Heart right ventricle (tissue), 16 donors: ENCODE measurements at regions of chr2 and their contacts with region 1.

Region 1: GRCh38 chr2:212536817-212537725 is 1.5 kb downstream of the ERBB4 start:
- DNase-seq: peak in 1 of 2 donors; percentile 19
- ATAC-seq: peak; percentile 1 to 48 (median 30)
- H3K4me3 ChIP-seq: peak overlapping the region; percentile 37 to 71 (median 66)
- H3K27ac ChIP-seq: peak overlapping the region in 9 of 10 donors; percentile 36 to 74 (median 62)
- H3K4me1 ChIP-seq: peaks cover 0 to 38% (median 11%) of the 10 kb centered on the region in 9 donors
- H3K27me3 ChIP-seq: peaks cover 0 to 74% (median 53%) of the 10 kb centered on the region in 7 donors
- CTCF ChIP-seq: no peak

Region 2: GRCh38 chr2:211881449-211881848 is 655.6 kb before region 1 on chr2:
- intact Hi-C with region 1: loop called in 1 of 10 experiments (anchors 10 kb)
- DNase-seq: no peak
- ATAC-seq: no peak
- H3K4me3 ChIP-seq: no peak overlapping the region
- H3K27ac ChIP-seq: no peak overlapping the region
- H3K4me1 ChIP-seq: no peaks in the 10 kb centered on the region
- H3K27me3 ChIP-seq: no peaks in the 10 kb centered on the region
- CTCF ChIP-seq: no peak

Region 3: GRCh38 chr2:211898702-211899101 is 638.4 kb before region 1 on chr2:
- intact Hi-C with region 1: loop called in 1 of 10 experiments (anchors 2 kb)
- DNase-seq: no peak
- ATAC-seq: no peak
- H3K4me3 ChIP-seq: no peak overlapping the region
- H3K27ac ChIP-seq: peak overlapping the region in 2 of 10 donors; percentile 59
- H3K4me1 ChIP-seq: peaks cover 0 to 17% (median 0%) of the 10 kb centered on the region in 9 donors
- H3K27me3 ChIP-seq: no peaks in the 10 kb centered on the region
- CTCF ChIP-seq: no peak

Region 4: DNA sequence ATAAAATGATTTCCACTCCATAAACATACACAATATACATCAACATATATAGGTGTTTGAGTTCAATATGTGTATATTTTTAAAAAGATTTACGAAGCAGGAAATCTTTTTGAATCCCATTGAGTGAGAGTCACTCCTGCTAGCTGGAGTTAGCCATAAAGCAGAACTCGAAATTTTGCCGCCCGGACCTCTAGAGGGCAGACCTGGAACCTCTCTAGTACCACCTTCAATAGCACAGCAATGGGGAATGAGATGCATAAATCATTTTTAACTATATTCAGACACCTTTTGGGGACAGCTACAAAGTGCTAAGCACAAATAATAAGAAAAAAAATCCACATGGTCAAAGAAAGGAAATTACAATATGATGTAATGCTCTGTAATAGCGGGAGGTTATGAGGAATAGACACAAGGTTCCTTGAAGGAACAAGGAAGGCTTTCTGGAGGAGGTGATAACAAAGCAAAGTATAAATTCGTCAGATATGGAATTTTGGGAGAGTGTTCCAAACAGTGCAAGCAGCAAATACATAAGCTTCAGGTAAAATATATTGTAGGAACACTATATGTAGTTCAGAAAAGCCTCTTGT is 531.9 kb before region 1 on chr2:
- intact Hi-C with region 1: loop called in 2 of 10 experiments (anchors 10 kb)
- DNase-seq: peak; percentile 8 to 9
- ATAC-seq: peak in 3 of 8 donors; percentile 55 to 62 (median 56)
- H3K4me3 ChIP-seq: no peak overlapping the region
- H3K27ac ChIP-seq: no peak overlapping the region
- H3K4me1 ChIP-seq: no peaks in the 10 kb centered on the region
- H3K27me3 ChIP-seq: no peaks in the 10 kb centered on the region
- CTCF ChIP-seq: peak in 7 of 9 donors; percentile 37 to 59 (median 43)

Region 5: DNA sequence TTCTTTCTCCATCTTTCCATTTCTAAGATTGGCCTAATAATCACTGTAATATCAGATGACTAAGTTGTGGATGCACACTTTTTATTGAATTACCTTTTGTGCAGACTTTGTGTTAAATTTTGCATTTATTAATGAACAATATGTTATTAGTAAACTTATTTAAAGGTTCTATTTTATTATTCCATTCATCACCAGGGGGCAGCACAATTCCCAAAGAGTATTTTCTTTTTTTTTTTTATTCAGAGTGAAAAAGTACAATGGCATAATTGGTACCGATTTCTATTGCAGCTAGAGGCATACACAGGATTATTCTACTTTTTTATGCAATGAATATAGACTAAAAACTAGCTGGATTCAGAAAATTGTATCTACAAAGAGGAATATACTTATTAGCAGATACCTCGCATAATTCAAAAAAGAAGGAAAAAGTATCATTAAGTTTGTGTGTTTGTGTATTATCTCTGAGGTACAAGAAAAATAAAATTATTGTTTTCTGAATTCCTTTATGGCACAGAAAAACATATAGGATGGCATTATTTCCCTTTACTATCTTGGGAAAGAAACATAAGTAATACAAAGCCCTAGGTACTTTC is 389.1 kb before region 1 on chr2:
- intact Hi-C with region 1: loop called in 5 of 10 experiments (anchors 10 kb)
- DNase-seq: no peak
- ATAC-seq: no peak
- H3K4me3 ChIP-seq: no peak overlapping the region
- H3K27ac ChIP-seq: no peak overlapping the region
- H3K4me1 ChIP-seq: no peaks in the 10 kb centered on the region
- H3K27me3 ChIP-seq: no peaks in the 10 kb centered on the region
- CTCF ChIP-seq: peak in 8 of 9 donors; percentile 16 to 60 (median 42)

Region 6: DNA sequence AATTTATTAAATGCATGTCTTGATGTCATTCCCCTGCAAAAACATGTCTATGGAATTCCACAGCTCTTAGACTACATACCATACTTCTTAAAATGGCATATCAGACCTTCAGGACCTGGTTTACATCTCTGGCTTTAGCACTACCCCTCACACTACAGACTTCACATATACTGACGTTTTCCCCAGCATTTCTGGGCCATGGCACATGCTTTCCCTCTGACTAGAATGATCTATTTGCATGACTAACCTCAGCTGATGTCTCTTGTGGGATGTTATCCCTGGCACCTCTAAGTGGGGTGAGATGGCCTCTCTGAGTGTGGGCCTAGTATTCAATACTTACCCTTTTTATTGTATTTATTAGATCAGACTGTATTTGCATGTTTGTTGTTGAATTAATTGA is 380.1 kb before region 1 on chr2:
- intact Hi-C with region 1: loop called in 2 of 10 experiments (anchors 10 kb)
- DNase-seq: no peak
- ATAC-seq: no peak
- H3K4me3 ChIP-seq: no peak overlapping the region
- H3K27ac ChIP-seq: no peak overlapping the region
- H3K4me1 ChIP-seq: peaks cover 0 to 6% (median 0%) of the 10 kb centered on the region in 9 donors
- H3K27me3 ChIP-seq: no peaks in the 10 kb centered on the region
- CTCF ChIP-seq: no peak

Region 7: DNA sequence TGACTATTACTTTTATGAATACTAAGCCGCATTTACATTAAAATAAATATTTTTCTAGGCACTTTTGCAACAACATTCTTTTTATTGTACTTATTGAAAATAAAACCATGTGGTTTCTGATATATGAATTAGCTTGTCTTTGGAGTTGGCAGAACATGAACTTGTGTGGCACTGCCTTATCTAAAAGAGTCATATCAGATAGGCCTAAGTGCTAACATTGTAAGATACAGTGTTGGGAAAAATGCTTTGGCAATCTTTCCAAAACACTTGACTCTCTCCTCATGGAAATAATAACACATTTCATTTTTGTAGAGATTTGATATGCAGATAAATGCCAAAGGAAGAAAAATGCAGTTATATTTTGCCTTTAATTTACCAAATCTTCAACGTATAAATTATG is 190.2 kb before region 1 on chr2:
- intact Hi-C with region 1: loop called in 1 of 10 experiments (anchors 10 kb)
- DNase-seq: no peak
- ATAC-seq: no peak
- H3K4me3 ChIP-seq: no peak overlapping the region
- H3K27ac ChIP-seq: no peak overlapping the region
- H3K4me1 ChIP-seq: peaks cover 0 to 7% (median 0%) of the 10 kb centered on the region in 9 donors
- H3K27me3 ChIP-seq: no peaks in the 10 kb centered on the region
- CTCF ChIP-seq: no peak